Activated CD4-positive, alpha-beta memory T cell treated with anti-CD3 and anti-CD28 coated beads for 36 hours (primary cell): ENCODE measurements at regions of chr2 and their contacts with region 1.

Region 1: DNA sequence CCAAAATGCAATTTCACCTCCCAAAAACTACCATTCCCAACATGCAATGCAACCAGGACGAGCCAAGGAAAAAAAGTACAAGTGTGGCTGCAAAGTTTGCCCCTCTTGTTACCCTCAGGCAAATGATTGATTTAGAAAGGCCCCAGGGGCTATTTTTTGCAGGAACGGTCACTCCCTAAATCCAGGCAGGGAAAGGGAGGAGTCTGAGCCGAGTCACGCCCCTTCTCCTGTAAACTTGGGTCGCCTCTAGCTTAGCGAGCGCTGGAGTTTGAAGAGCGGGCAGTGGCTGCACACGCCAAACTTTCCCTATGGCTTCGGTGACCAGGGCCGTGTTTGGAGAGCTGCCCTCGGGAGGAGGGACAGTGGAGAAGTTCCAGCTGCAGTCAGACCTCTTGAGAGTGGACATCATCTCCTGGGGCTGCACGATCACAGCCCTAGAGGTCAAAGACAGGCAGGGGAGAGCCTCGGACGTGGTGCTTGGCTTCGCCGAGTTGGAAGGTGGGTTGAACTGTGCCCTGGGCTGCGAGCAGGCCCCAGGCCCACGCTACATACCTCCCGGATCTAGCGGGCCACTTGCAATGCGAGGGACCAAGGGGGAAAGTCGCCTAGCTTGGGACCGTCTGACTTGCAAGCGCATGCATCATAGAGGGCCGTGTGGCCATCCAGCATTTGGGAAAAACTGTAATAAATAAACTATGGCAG is at the start of gene GALM:
- DNase-seq: peak; percentile 82
- H3K4me3 Mint-ChIP-seq: peak within 1 kb of the TSS; percentile 85
- H3K27ac Mint-ChIP-seq: peak within 1 kb of the TSS; percentile 97
- H3K4me1 Mint-ChIP-seq: peaks cover 68% of the 10 kb centered on the region
- H3K27me3 Mint-ChIP-seq: no peaks in the 10 kb centered on the region
- total RNA-seq, gene GALM: 90.2 to 95.3 TPM

Region 2: DNA sequence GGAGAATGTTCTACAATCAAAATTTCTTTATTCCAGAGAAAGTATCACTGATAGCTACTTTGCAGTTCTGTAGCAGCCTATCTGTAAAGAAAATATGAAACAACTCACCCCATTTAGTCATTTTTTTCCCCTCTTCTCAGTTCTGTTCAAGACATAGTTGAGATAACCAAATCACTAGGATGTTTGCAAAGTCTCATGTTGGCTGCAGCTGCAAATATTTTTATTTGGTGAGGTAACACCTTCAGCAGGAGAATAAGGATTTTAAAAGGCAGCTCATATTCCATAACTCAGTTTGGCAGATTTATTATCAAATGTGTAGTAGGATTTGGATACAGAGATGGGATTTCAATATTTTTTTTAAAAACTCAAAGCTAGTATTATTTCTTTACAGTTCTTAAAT is 104.3 kb before region 1 on chr2:
- CTCF ChIA-PET with region 1: no interaction called
- POLR2A ChIA-PET with region 1: no interaction called
- intact Hi-C with region 1: no loop called
- DNase-seq: no peak
- H3K4me3 Mint-ChIP-seq: no peak overlapping the region
- H3K27ac Mint-ChIP-seq: peak overlapping the region; percentile 15
- H3K4me1 Mint-ChIP-seq: no peaks in the 10 kb centered on the region
- H3K27me3 Mint-ChIP-seq: no peaks in the 10 kb centered on the region

Region 3: GRCh38 chr2:38602732-38603401 is 63.1 kb before region 1 on chr2 and contains the start of gene HNRNPLL:
- CTCF ChIA-PET with region 1: interaction called, 85 read pairs
- POLR2A ChIA-PET with region 1: interaction called, 235 read pairs
- intact Hi-C with region 1: loop called (anchors 1 kb)
- DNase-seq: peak; percentile 98
- H3K4me3 Mint-ChIP-seq: peak within 1 kb of the TSS; percentile 92
- H3K27ac Mint-ChIP-seq: peak within 1 kb of the TSS; percentile 93
- H3K4me1 Mint-ChIP-seq: peaks cover 39% of the 10 kb centered on the region
- H3K27me3 Mint-ChIP-seq: no peaks in the 10 kb centered on the region
- total RNA-seq, gene HNRNPLL: 106 to 108 TPM

Region 4: GRCh38 chr2:38653715-38654527 is 12.1 kb before region 1 on chr2:
- CTCF ChIA-PET with region 1: interaction called, 76 read pairs
- POLR2A ChIA-PET with region 1: interaction called, 203 read pairs
- intact Hi-C with region 1: loop called (anchors 1 kb)
- DNase-seq: peak; percentile 89
- H3K4me3 Mint-ChIP-seq: peak overlapping the region; percentile 63
- H3K27ac Mint-ChIP-seq: peak overlapping the region; percentile 91
- H3K4me1 Mint-ChIP-seq: peaks cover 68% of the 10 kb centered on the region
- H3K27me3 Mint-ChIP-seq: no peaks in the 10 kb centered on the region

Region 5: DNA sequence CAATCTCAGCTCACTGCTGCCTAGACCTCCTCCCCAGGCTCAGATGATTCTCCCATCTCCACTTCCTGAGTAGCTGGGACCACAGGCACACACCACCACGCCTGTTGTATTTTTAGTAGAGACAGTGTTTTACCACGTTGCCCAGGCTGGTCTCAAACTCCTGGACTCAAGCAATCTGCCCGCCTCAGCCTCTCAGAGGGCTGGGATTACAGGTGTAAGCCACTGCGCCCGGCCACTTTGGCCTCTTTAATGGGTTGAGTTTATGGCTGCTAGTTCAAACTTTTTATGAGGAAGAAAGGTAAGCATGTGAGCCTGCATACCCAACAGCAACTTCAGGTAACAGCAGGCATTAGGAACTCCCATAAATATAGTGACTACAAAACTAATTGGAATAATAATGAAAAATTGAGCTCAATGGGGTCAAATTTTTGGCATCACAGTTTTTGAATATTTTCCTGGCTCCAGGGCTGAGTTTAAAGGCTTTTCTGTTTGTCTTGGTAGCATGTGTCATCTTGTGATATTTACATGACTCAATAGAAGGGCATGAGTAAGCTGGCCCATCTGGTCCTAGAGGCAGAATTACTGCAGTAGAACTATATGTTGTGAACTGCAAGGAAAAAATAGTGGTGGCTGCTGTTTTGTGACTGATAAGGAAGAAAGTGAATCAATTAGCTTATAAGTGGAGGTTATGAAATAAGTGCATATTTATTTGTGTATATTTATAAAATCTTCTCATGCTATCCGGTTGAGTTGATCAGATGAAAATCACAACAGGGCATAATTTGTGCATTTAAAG is 24.7 kb after region 1 on chr2:
- CTCF ChIA-PET with region 1: interaction called, 5 read pairs
- POLR2A ChIA-PET with region 1: interaction called, 4 read pairs
- intact Hi-C with region 1: loop called (anchors 2 kb)
- DNase-seq: peak; percentile 50
- H3K4me3 Mint-ChIP-seq: no peak overlapping the region
- H3K27ac Mint-ChIP-seq: peak overlapping the region; percentile 88
- H3K4me1 Mint-ChIP-seq: peaks cover 78% of the 10 kb centered on the region
- H3K27me3 Mint-ChIP-seq: no peaks in the 10 kb centered on the region

Region 6: GRCh38 chr2:38702413-38702812 is 36.4 kb after region 1 on chr2:
- CTCF ChIA-PET with region 1: interaction called, 3 read pairs
- POLR2A ChIA-PET with region 1: interaction called, 11 read pairs
- intact Hi-C with region 1: loop called (anchors 1 kb)
- DNase-seq: no peak
- H3K4me3 Mint-ChIP-seq: peak overlapping the region; percentile 34
- H3K27ac Mint-ChIP-seq: peak overlapping the region; percentile 97
- H3K4me1 Mint-ChIP-seq: peaks cover 71% of the 10 kb centered on the region
- H3K27me3 Mint-ChIP-seq: no peaks in the 10 kb centered on the region

Region 7: GRCh38 chr2:38720613-38721241 is 54.7 kb after region 1 on chr2:
- CTCF ChIA-PET with region 1: interaction called, 6 read pairs
- POLR2A ChIA-PET with region 1: interaction called, 18 read pairs
- intact Hi-C with region 1: loop called (anchors 1 kb)
- DNase-seq: peak; percentile 47
- H3K4me3 Mint-ChIP-seq: peak overlapping the region; percentile 25
- H3K27ac Mint-ChIP-seq: peak overlapping the region; percentile 84
- H3K4me1 Mint-ChIP-seq: peaks cover 72% of the 10 kb centered on the region
- H3K27me3 Mint-ChIP-seq: no peaks in the 10 kb centered on the region

Region 8: GRCh38 chr2:39216346-39217191 is 550.6 kb after region 1 on chr2:
- CTCF ChIA-PET with region 1: no interaction called
- POLR2A ChIA-PET with region 1: no interaction called
- intact Hi-C with region 1: loop called (anchors 10 kb)
- DNase-seq: peak; percentile 79
- H3K4me3 Mint-ChIP-seq: peak overlapping the region; percentile 38
- H3K27ac Mint-ChIP-seq: peak overlapping the region; percentile 85
- H3K4me1 Mint-ChIP-seq: peaks cover 56% of the 10 kb centered on the region
- H3K27me3 Mint-ChIP-seq: no peaks in the 10 kb centered on the region